Posterior vena cava (tissue), 2 donors: ENCODE measurements at regions of chr5 and their contacts with region 1.

Region 1: DNA sequence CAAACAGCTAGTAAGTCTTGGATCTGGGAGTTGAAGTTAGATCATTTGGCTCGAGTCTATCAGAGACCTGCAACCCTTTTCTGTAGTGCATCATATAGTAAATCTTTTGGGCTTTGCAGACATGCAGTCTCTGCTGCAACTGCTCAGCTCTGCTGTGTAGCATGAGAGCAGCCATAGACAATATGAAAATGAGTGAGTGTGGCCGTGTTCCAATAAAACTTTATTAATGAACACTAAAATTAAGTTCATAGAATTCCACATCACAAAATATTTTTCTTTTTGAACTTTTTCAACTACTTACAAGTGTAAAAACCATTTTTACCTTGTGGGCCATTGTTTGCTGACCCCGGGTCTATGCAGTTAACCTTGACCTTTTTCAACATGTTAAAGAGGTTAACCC is 35.2 kb downstream of the ROPN1L start:
- DNase-seq: no peak

Region 2: DNA sequence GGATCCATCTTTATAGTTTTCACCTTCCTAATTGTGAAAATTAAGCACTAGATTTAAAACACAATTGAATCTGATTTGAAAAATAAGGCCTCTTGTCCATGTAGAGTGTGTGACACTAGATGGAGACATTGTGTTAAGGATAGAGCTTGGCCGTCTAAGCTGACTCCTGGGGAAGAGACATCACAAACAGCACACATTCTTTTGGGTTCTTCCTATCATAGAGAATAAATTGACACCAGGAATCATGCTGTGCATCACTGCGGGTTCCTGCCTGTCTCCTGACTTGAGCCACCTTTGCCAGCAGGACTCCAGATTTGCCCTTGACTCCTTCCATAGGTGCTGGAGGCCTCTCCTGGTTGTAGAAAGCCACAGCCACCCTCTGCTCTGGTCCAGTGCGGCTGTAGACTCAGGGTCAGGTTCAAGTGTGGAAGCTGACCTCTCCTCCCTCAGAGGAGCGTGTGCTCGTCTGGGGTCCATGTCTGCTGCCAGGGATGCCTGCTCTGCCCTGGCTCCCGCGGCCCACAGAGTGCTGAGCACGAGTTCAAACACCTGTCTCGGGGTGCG is 24.0 kb before region 1 on chr5:
- intact Hi-C with region 1: no loop called
- DNase-seq: no peak

Region 3: GRCh38 chr5:10501554-10502075 is 24.7 kb after region 1 on chr5:
- intact Hi-C with region 1: loop called in 1 of 2 experiments (anchors 1 kb)
- DNase-seq: no peak

Region 4: DNA sequence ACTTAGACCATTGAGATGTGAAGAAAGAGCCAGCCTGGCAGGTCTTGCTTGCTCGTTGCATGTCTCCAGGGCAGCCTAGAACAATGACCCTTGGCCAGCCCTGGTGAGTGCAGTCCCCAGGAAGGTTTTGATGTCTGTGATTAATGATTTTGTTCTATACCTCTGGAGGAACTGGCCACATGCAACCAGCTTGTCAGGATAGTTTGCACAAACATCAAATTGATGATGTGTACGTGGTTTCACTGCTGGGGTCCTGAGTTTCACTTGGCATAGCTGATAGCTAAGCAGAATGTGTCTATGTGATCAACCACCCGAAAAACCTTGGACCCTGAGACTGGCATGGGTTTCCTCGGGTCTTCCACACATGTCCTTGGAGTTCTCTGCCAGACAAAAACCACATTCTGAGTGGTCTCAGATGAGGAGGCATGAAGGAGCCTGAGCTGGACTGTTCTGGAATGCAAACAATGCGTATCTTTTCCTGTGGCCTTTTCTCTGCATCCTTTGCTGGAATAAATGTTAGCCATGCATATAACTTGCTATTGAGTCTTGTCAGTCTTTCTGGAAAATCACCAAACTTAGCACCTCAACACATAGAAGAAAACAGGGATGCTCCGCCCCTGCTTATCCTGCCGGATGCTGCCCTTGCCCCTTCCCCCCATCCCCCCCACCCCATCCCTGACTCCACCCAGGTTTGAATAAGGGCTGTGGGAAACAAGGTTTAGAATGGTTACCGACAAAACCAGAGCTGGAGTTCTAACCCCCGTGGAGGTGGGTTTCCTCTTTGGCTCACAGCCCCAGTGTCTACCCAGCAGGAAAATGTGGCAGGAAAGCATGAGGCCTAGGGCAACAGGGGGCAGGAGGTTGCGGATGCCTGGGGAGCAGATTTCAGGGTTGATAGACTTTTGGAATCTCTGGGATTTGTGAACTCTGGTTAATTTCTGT is 36.9 kb after region 1 on chr5:
- intact Hi-C with region 1: no loop called
- DNase-seq: no peak

Region 5: DNA sequence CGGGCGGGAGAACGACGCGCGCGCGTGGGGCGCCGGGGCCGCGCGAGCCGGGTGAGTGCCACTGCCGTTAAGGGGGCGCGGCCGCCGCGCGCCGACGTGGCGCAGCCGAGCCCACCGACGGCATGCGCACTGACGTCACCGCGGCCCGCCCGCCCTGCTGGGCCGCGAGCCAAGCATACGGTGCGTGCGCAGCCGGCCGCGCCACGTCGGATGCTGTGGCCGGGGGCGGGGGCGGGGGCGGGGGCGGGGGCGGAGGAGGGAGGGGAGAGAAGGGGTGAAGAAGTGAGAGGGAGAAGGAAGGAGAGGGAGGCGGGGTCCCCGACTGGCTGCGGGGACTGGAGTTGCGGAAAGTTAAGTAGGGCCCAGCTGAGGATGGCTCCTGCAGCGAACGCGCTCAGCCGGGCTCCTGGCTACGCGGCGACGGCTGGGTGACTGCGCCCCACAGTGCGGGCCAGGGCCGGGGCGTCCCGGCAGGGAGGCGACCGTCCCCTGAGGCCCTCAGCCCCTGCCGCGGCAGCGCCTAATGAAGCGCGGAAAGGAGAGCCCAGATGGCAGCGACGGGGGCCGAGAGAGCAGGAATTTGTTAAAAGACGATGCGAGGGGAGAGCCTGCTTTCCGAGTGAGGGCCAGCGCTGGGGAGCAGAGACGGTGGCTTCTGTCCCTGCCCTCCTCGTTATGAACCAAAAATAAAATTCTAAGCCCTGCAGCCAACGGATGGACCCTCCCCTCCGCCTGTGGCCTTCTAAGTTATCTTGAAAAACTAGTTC is 284.5 kb after region 1 on chr5 and contains the start of gene DAP:
- intact Hi-C with region 1: no loop called
- DNase-seq: peak; percentile 96
- total RNA-seq, gene DAP: 86.9 to 102 TPM